CD8-positive, alpha-beta T cell (primary cell): ENCODE measurements at regions of chr5 and their contacts with region 1.

Region 1: GRCh38 chr5:1641560-1642166 is 117.9 kb upstream of the LPCAT1 start:
- DNase-seq: peak; percentile 59 to 88 (median 76)
- ATAC-seq: peak; percentile 92
- H3K4me3 ChIP-seq: no peak overlapping the region
- H3K4me3 Mint-ChIP-seq: peak overlapping the region; percentile 8
- H3K27ac ChIP-seq: no peak overlapping the region
- H3K27ac Mint-ChIP-seq: no peak overlapping the region
- H3K4me1 ChIP-seq: peaks cover 17% of the 10 kb centered on the region
- H3K4me1 Mint-ChIP-seq: peaks cover 13% of the 10 kb centered on the region
- H3K27me3 ChIP-seq: peaks cover 17 to 21% of the 10 kb centered on the region in 2 experiments
- H3K27me3 Mint-ChIP-seq: peaks cover 27% of the 10 kb centered on the region
- CTCF ChIP-seq: peak; percentile 100

Region 2: DNA sequence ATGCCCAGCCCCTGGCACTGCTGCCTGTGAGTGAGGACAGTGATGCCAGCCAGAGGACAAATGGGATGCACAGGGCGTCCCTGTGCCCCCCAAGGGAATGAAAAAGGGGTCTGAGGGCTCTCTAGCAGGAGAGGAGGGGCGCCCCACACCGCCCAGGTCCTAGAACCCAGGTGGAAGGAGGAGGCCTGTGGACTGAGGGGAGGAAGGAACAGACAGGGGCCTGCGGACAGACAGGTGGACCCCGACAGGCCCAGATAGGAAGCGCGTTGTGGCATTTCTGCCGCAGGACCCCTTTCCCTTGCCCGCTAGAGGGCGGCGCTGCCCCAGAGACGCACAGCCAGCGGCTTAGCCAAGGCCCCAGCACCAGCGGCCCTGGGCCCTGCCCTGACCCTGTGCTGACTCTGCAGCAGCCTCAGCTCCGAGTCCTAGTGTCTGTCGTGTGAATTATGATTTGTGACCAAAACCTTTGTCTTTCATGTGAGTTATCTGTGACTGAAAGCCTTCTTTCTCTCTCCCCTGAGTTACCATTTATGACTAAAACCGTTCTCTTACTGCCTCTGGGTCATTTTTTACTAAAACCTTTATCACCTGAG is 718.3 kb before region 1 on chr5:
- CTCF ChIA-PET with region 1: interaction called, 5 read pairs
- POLR2A ChIA-PET with region 1: no interaction called
- intact Hi-C with region 1: loop called (anchors 2 to 10 kb)
- DNase-seq: peak; percentile 50 to 84 (median 68)
- ATAC-seq: peak; percentile 86
- H3K4me3 ChIP-seq: no peak overlapping the region
- H3K4me3 Mint-ChIP-seq: no peak overlapping the region
- H3K27ac ChIP-seq: no peak overlapping the region
- H3K27ac Mint-ChIP-seq: no peak overlapping the region
- H3K4me1 ChIP-seq: no peaks in the 10 kb centered on the region
- H3K4me1 Mint-ChIP-seq: peaks cover 10% of the 10 kb centered on the region
- H3K27me3 ChIP-seq: peaks cover 8 to 10% of the 10 kb centered on the region in 2 experiments
- H3K27me3 Mint-ChIP-seq: peaks cover 23% of the 10 kb centered on the region
- CTCF ChIP-seq: peak; percentile 69

Region 3: GRCh38 chr5:1174122-1174936 is 467.3 kb before region 1 on chr5:
- CTCF ChIA-PET with region 1: interaction called, 46 read pairs
- POLR2A ChIA-PET with region 1: no interaction called
- intact Hi-C with region 1: no loop called
- DNase-seq: peak in 6 of 9 experiments; percentile 29 to 70 (median 56)
- ATAC-seq: peak; percentile 38
- H3K4me3 ChIP-seq: no peak overlapping the region
- H3K4me3 Mint-ChIP-seq: no peak overlapping the region
- H3K27ac ChIP-seq: no peak overlapping the region
- H3K27ac Mint-ChIP-seq: no peak overlapping the region
- H3K4me1 ChIP-seq: no peaks in the 10 kb centered on the region
- H3K4me1 Mint-ChIP-seq: peaks cover 9% of the 10 kb centered on the region
- H3K27me3 ChIP-seq: no peaks in the 10 kb centered on the region
- H3K27me3 Mint-ChIP-seq: no peaks in the 10 kb centered on the region
- CTCF ChIP-seq: peak; percentile 55

Region 4: GRCh38 chr5:1380011-1380817 is 261.4 kb before region 1 on chr5:
- CTCF ChIA-PET with region 1: interaction called, 17 read pairs
- POLR2A ChIA-PET with region 1: no interaction called
- intact Hi-C with region 1: loop called (anchors 1 to 2 kb)
- DNase-seq: peak; percentile 21 to 80 (median 57)
- ATAC-seq: peak; percentile 92
- H3K4me3 ChIP-seq: peak overlapping the region; percentile 14 to 37
- H3K4me3 Mint-ChIP-seq: peak overlapping the region; percentile 81
- H3K27ac ChIP-seq: no peak overlapping the region
- H3K27ac Mint-ChIP-seq: no peak overlapping the region
- H3K4me1 ChIP-seq: peaks cover 12% of the 10 kb centered on the region
- H3K4me1 Mint-ChIP-seq: peaks cover 8% of the 10 kb centered on the region
- H3K27me3 ChIP-seq: no peaks in the 10 kb centered on the region
- H3K27me3 Mint-ChIP-seq: no peaks in the 10 kb centered on the region
- CTCF ChIP-seq: peak; percentile 85

Region 5: DNA sequence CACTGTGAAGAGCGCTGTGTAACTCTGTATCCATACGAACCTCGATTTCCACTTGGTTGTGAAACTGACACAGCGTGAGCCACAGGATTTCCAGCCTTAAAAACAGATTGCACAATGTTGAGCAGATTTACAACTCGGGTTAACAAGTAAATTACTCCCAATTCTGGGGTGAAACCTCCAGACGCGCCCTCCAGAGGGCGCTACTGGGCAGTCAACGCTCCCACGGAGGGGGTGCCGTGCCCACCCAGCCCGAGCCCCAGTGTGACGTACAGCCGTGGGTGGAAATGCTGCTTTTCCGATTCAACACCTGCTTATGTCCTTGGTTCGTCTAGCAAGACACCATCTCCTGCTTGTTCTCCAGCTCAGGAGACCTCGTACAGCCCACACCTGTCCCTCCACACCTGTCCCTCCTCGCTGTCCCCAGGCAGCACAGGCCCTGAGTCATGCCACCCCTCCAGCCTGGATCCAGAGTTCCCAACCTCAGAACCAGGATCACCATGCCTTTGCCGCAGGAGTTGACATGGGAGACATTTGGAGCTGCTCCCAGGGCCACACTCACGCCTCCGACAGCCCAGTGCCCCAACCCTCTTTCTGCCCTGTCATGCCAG is 162.0 kb before region 1 on chr5:
- CTCF ChIA-PET with region 1: interaction called, 39 read pairs
- POLR2A ChIA-PET with region 1: no interaction called
- intact Hi-C with region 1: loop called (anchors 1 kb)
- DNase-seq: peak; percentile 21 to 78 (median 63)
- ATAC-seq: peak; percentile 85
- H3K4me3 ChIP-seq: no peak overlapping the region
- H3K4me3 Mint-ChIP-seq: no peak overlapping the region
- H3K27ac ChIP-seq: no peak overlapping the region
- H3K27ac Mint-ChIP-seq: no peak overlapping the region
- H3K4me1 ChIP-seq: peaks cover 4% of the 10 kb centered on the region
- H3K4me1 Mint-ChIP-seq: peaks cover 8% of the 10 kb centered on the region
- H3K27me3 ChIP-seq: no peaks in the 10 kb centered on the region
- H3K27me3 Mint-ChIP-seq: no peaks in the 10 kb centered on the region
- CTCF ChIP-seq: peak; percentile 83

Region 6: GRCh38 chr5:1523771-1524480 is 117.7 kb before region 1 on chr5 and contains the start of gene LPCAT1:
- CTCF ChIA-PET with region 1: interaction called, 6 read pairs
- POLR2A ChIA-PET with region 1: no interaction called
- intact Hi-C with region 1: loop called in 1 of 2 experiments (anchors 1 kb)
- DNase-seq: peak; percentile 49 to 88 (median 73)
- ATAC-seq: peak; percentile 84
- H3K4me3 ChIP-seq: peak within 1 kb of the TSS; percentile 57 to 66
- H3K4me3 Mint-ChIP-seq: peak within 1 kb of the TSS; percentile 81
- H3K27ac ChIP-seq: peak within 1 kb of the TSS; percentile 52 to 78
- H3K27ac Mint-ChIP-seq: peak within 1 kb of the TSS; percentile 82
- H3K4me1 ChIP-seq: peaks cover 33% of the 10 kb centered on the region
- H3K4me1 Mint-ChIP-seq: peaks cover 24% of the 10 kb centered on the region
- H3K27me3 ChIP-seq: no peaks in the 10 kb centered on the region
- H3K27me3 Mint-ChIP-seq: no peaks in the 10 kb centered on the region
- CTCF ChIP-seq: no peak
- total RNA-seq, gene LPCAT1: 28.8 to 29.1 TPM

Region 7: DNA sequence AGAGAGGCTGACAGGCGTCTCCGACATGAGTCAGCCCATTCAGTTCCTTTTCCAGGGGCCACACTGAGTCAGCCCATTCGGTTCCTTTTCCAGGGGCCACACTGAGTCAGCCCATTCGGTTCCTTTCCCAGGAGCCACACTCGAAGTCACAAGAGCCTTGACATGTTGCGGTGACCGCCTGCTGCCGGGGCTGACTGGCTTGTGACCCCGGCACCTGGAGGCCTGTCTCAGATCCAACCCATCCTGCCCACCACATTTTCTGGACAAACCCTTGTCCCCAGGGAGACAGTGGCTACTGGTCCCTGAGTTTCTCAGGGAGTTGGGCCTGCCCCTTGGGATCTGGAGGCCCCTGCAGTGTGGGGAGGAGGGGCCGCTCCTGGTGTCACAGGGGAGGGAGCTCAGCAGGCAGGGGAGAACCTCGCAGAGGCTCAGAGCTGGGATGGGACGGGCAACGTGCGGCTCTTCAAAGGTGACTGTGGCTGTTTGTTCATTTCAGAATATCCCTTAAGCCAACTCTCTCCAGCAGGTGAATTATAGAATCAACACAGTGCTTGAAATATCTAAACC is 77.4 kb before region 1 on chr5:
- CTCF ChIA-PET with region 1: no interaction called
- POLR2A ChIA-PET with region 1: no interaction called
- intact Hi-C with region 1: no loop called
- DNase-seq: peak in 1 of 9 experiments; percentile 35
- ATAC-seq: no peak
- H3K4me3 ChIP-seq: no peak overlapping the region
- H3K4me3 Mint-ChIP-seq: no peak overlapping the region
- H3K27ac ChIP-seq: no peak overlapping the region
- H3K27ac Mint-ChIP-seq: no peak overlapping the region
- H3K4me1 ChIP-seq: no peaks in the 10 kb centered on the region
- H3K4me1 Mint-ChIP-seq: no peaks in the 10 kb centered on the region
- H3K27me3 ChIP-seq: no peaks in the 10 kb centered on the region
- H3K27me3 Mint-ChIP-seq: no peaks in the 10 kb centered on the region
- CTCF ChIP-seq: no peak

Region 8: GRCh38 chr5:1652596-1653345 is 11.1 kb after region 1 on chr5:
- CTCF ChIA-PET with region 1: interaction called, 36 read pairs
- POLR2A ChIA-PET with region 1: no interaction called
- intact Hi-C with region 1: no loop called
- DNase-seq: no peak
- ATAC-seq: no peak
- H3K4me3 ChIP-seq: no peak overlapping the region
- H3K4me3 Mint-ChIP-seq: no peak overlapping the region
- H3K27ac ChIP-seq: no peak overlapping the region
- H3K27ac Mint-ChIP-seq: no peak overlapping the region
- H3K4me1 ChIP-seq: peaks cover 9% of the 10 kb centered on the region
- H3K4me1 Mint-ChIP-seq: peaks cover 5% of the 10 kb centered on the region
- H3K27me3 ChIP-seq: peaks cover 4 to 22% of the 10 kb centered on the region in 2 experiments
- H3K27me3 Mint-ChIP-seq: peaks cover 47% of the 10 kb centered on the region
- CTCF ChIP-seq: no peak

Region 9: DNA sequence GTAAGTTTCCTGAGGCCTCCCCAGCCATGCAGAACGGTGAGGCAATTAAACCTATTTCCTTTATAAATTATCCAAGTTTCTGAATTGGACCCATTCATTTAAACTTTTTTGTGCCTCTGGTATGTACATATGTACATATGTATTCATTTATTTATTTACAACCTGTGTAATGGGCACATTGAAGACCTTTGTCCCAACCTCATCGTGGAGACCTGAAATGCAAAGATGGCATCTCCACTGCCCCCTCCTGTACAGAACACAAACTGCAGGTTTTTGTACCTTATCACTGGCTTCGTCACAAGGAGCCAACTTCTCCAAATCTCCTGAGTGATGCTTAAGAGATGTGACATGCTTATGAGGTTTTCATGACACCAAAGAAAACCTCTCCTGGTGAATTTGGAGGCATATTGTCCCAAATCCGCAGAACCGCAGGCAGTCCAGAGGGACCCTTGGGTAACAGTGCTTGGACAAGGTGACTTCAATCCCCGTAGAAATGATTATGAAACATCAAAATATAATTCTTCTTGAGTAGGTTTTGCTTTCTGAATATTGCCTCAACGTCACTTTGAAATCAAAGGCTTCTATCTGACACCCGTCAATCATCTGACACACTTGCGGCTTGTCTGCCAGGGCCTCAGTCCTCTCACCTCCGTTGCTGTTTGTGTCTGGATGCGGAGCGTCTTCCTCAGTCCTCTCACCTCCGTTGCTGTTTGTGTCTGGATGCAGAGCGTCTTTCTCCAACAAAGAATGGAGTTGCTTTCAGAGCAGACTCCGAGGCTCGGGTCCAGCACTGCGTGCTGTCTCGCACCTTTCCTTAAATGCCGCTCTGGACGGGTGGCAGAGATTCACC is 376.1 kb after region 1 on chr5:
- CTCF ChIA-PET with region 1: no interaction called
- POLR2A ChIA-PET with region 1: no interaction called
- intact Hi-C with region 1: no loop called
- DNase-seq: peak in 3 of 9 experiments; percentile 19 to 44 (median 36)
- ATAC-seq: no peak
- H3K4me3 ChIP-seq: no peak overlapping the region
- H3K4me3 Mint-ChIP-seq: no peak overlapping the region
- H3K27ac ChIP-seq: no peak overlapping the region
- H3K27ac Mint-ChIP-seq: no peak overlapping the region
- H3K4me1 ChIP-seq: no peaks in the 10 kb centered on the region
- H3K4me1 Mint-ChIP-seq: no peaks in the 10 kb centered on the region
- H3K27me3 ChIP-seq: no peaks in the 10 kb centered on the region
- H3K27me3 Mint-ChIP-seq: peaks cover 11% of the 10 kb centered on the region
- CTCF ChIP-seq: peak; percentile 55